WTC11 (cell line): ENCODE measurements at regions of chr10 and their contacts with region 1.

Region 1: DNA sequence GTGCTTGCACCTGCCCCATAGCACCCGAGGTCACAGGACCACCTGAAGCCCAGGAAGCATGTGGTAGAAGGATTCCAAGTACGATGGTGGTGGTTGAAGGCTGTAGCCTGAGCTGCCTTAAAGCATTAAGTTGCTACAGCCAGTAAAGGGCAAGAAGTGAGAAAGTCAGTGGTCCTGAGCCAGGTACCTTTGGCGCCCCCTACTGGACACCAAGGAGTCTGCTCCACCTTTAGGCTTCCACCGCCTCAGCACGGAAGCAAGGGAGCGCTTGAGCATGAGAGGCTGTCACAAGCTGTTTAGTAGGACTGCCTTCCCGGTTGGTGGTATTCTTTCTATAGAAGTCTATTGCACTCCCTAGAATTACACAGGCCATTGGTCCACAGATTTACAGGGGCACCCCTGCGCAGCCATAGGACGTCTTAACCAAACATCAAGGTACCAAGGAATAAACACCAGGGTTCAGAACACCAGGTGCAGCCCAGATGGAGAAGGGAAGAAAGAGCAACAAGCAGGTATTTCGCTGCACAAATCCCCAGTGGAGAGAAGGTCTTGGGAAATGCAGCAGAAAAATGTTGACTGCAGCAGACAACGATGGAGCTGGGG is 2.2 kb downstream of the CRTAC1 start:
- DNase-seq: peak; percentile 87
- ATAC-seq: peak; percentile 55
- H3K4me3 Mint-ChIP-seq: peak overlapping the region; percentile 52
- H3K27ac Mint-ChIP-seq: no peak overlapping the region
- H3K4me1 Mint-ChIP-seq: peaks cover 26% of the 10 kb centered on the region
- H3K27me3 Mint-ChIP-seq: peaks cover 68% of the 10 kb centered on the region
- CTCF ChIP-seq: peak; percentile 97

Region 2: DNA sequence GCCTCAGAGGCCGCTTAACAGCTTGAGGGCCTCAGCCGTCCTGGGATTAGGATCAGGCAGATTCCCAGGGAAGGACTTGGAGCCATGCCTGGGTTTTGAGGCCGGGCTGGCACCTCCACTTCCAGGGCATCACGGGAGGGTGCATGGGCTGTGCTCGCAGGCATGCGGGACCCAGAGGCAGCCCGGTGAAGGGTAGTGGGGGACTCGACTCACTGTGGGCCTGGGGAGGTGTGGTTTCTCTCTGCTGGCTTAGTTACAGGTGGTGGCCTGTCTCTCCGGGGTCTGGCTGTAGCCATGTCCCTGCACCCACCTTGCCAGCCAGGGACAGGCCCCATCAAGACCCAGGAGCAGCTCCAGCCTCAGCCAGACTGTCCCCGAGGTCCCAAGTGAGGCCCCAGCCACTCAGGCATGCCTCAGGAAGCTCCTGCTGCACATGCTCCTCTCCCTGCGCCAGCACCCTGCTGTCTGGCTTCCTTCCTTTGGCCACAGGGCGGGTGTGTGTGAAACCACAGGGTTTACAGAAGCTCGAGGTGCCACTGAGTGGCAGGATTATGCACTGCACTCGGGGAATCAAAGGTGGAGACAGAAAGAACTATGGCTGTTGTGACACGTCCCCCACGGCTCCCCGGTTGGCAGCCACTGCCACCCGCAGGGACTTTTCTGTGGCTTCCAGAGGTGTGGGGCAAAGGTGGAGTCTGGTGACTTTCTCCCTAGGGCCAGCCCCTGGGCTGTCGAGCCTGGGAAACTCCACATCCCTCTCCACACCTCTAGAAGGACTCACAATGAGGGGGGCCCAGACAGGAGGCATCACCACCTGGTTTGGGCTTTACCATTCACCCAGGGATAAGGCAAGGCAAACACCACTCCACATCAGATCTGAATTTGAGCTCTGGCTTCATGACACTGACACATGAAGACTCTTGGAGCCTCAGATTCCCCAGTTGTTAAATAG is 158.9 kb before region 1 on chr10:
- CTCF ChIA-PET with region 1: interaction called, 14 read pairs
- POLR2A ChIA-PET with region 1: no interaction called
- DNase-seq: peak; percentile 78
- ATAC-seq: peak; percentile 93
- H3K4me3 Mint-ChIP-seq: no peak overlapping the region
- H3K27ac Mint-ChIP-seq: no peak overlapping the region
- H3K4me1 Mint-ChIP-seq: peaks cover 28% of the 10 kb centered on the region
- H3K27me3 Mint-ChIP-seq: no peaks in the 10 kb centered on the region
- CTCF ChIP-seq: 0 out of 2 replicates have a peak, but pooled peaks have one; percentile 12

Region 3: DNA sequence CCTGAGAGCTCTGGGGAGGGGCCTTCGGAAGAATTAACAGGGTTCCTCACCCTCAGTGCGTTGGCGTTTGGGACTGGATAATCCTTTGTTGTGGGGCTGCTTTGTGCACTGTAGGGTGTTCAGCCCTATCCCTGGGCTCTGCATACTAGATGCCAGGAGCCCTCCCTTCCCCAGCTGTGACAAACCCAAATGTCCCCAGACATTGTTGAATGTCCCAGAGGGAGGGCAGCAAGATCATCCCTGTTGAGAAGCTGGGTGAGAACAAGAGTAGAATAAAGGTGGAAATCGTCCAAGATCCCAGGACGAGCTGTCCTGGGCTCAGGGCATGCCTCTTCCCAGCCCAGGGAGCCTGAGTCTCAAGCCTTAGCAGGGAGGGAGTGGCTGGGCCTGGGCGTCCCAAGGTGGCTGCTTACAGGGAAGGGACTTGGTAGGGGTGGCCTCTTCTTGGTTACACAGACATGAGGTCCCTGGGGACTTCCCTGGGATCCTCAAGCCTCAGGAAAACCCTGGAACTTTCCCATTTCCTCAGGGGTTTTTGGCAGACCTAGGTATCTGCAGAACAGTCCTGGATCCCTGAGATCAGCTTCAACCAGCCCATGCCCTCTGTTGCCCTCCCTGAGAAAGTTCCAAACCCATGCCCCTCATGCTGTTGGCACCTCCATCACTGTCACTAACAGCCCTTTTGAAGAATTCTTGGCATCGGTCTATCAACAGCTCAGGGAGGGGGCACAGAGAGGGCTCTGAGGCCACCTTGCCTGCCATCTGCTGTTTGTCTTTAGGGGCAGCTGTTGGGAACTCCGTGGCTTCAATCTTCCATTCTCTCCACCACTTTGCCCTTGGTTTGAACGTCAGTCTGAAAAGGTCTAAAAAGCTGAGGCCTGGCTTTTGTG is 124.9 kb before region 1 on chr10:
- CTCF ChIA-PET with region 1: interaction called, 12 read pairs
- POLR2A ChIA-PET with region 1: no interaction called
- DNase-seq: no peak
- ATAC-seq: peak; percentile 16; the same call in 1 of the 2 replicates
- H3K4me3 Mint-ChIP-seq: no peak overlapping the region
- H3K27ac Mint-ChIP-seq: no peak overlapping the region
- H3K4me1 Mint-ChIP-seq: peaks cover 5% of the 10 kb centered on the region; the same call in 1 of the 2 replicates
- H3K27me3 Mint-ChIP-seq: no peaks in the 10 kb centered on the region
- CTCF ChIP-seq: no peak

Region 4: GRCh38 chr10:97974526-97975525 is 53.4 kb before region 1 on chr10:
- CTCF ChIA-PET with region 1: interaction called, 16 read pairs
- POLR2A ChIA-PET with region 1: no interaction called
- DNase-seq: peak; percentile 43
- ATAC-seq: peak; percentile 70
- H3K4me3 Mint-ChIP-seq: peak overlapping the region; percentile 71
- H3K27ac Mint-ChIP-seq: no peak overlapping the region
- H3K4me1 Mint-ChIP-seq: peaks cover 24% of the 10 kb centered on the region
- H3K27me3 Mint-ChIP-seq: peaks cover 43% of the 10 kb centered on the region
- CTCF ChIP-seq: no peak

Region 5: DNA sequence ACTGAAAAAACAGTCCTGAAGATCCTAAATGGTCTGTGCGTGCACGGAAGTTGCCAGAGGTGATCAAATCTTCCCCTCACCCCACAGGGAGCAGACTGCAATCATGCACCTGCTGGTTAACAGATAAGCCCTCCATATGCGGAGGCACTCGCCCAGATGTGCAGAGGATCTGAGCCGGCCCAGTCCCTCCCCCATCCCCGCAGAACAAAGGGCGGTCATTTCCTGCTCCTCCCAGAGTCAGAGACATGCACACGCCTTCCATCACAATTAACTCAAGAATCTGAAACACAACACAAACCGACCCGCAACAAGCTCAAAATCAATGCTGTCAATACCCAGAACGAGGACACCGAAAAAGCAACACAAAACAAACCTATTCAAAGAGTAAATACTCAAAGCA is 22.0 kb before region 1 on chr10:
- CTCF ChIA-PET with region 1: interaction called, 15 read pairs
- POLR2A ChIA-PET with region 1: interaction called, 4 read pairs
- DNase-seq: peak; percentile 62
- ATAC-seq: peak; percentile 96
- H3K4me3 Mint-ChIP-seq: peak overlapping the region; percentile 59
- H3K27ac Mint-ChIP-seq: 0 out of 2 replicates have a peak overlapping the region, but pooled peaks have one; percentile 3
- H3K4me1 Mint-ChIP-seq: peaks cover 49% of the 10 kb centered on the region
- H3K27me3 Mint-ChIP-seq: peaks cover 8% of the 10 kb centered on the region; the same call in 1 of the 2 replicates
- CTCF ChIP-seq: no peak

Region 6: GRCh38 chr10:98038288-98038687 is 10.0 kb after region 1 on chr10:
- CTCF ChIA-PET with region 1: interaction called, 119 read pairs
- POLR2A ChIA-PET with region 1: interaction called, 4 read pairs
- DNase-seq: peak; percentile 74
- ATAC-seq: peak; percentile 94
- H3K4me3 Mint-ChIP-seq: no peak overlapping the region
- H3K27ac Mint-ChIP-seq: no peak overlapping the region
- H3K4me1 Mint-ChIP-seq: peaks cover 13% of the 10 kb centered on the region
- H3K27me3 Mint-ChIP-seq: peaks cover 69% of the 10 kb centered on the region
- CTCF ChIP-seq: no peak

Region 7: DNA sequence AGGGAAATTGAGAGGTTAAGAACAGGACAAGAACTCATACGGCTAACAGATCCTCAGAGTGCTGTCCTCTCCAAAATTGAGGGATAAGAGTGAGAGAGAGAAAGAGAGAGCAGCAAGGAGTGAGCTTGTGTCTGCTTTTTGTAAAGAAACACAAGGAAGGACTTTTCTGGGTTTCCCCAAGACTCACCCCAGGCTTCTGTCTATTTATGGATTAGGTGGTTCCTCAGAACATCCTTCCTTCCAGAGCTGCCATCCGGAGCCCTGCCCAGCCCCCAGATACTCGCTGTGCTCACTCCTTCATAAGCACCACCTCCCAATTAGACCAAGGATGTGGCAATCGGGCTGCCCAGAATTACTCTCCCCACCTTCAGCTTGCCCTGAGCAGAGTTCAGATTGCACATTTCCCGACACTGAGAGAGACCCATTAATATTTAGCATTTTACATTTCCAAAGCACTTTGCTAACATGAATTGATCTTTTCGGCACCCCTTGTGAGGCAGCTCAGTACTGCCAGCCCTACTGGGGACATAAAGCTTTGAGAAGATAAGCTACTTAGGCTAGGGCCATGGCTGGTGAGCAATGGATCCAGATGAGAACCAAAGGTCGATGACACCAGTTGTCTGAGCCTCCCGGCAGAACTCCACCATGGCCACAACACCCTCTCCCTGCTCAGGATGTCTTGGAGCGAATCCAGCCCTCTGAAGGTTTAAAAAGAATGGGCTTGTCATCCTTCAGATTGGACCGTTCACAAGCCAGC is 86.9 kb after region 1 on chr10:
- CTCF ChIA-PET with region 1: no interaction called
- POLR2A ChIA-PET with region 1: no interaction called
- DNase-seq: no peak
- ATAC-seq: no peak
- H3K4me3 Mint-ChIP-seq: no peak overlapping the region
- H3K27ac Mint-ChIP-seq: no peak overlapping the region
- H3K4me1 Mint-ChIP-seq: no peaks in the 10 kb centered on the region; the same call in 1 of the 2 replicates
- H3K27me3 Mint-ChIP-seq: peaks cover 15% of the 10 kb centered on the region
- CTCF ChIP-seq: no peak